Activated CD4-positive, alpha-beta memory T cell treated with anti-CD3 and anti-CD28 coated beads for 36 hours (primary cell): ENCODE measurements at regions of chr6 and their contacts with region 1.

Region 1: DNA sequence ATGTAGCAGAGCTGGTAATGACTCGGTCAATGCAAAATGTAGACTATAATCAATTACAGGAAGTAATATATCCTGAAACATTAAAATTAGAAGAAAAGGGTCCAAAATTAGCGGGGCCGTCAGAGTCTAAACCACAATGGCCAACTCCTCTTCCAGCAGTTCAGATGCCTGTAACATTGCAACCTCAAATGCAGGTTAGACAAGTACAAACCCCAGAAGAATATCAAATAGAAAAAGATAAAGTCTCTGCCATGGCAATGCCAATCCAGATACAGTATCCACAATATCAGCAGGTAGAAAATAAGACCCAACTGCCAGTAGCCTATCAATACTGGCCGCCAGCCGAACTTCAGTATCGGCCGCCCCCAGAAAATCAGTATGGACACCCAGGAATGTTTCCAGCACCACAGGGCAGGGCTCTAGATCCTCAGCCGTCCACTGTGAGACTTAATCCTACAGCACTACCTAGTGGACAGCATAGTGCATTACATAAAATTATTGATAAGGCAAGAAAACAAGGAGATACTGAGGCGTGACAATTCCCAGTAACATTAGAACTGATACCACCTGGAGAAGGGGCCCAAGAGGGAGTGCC is 158.4 kb downstream of the GPX5 start:
- DNase-seq: peak; percentile 14
- H3K4me3 Mint-ChIP-seq: peak overlapping the region; percentile 5
- H3K27ac Mint-ChIP-seq: no peak overlapping the region
- H3K4me1 Mint-ChIP-seq: peaks cover 11% of the 10 kb centered on the region
- H3K27me3 Mint-ChIP-seq: peaks cover 46% of the 10 kb centered on the region

Region 2: GRCh38 chr6:27902335-27903314 is 781.4 kb before region 1 on chr6:
- CTCF ChIA-PET with region 1: no interaction called
- POLR2A ChIA-PET with region 1: no interaction called
- intact Hi-C with region 1: loop called (anchors 10 kb)
- DNase-seq: peak; percentile 92
- H3K4me3 Mint-ChIP-seq: peak overlapping the region; percentile 79
- H3K27ac Mint-ChIP-seq: peak overlapping the region; percentile 91
- H3K4me1 Mint-ChIP-seq: peaks cover 11% of the 10 kb centered on the region
- H3K27me3 Mint-ChIP-seq: peaks cover 13% of the 10 kb centered on the region

Region 3: DNA sequence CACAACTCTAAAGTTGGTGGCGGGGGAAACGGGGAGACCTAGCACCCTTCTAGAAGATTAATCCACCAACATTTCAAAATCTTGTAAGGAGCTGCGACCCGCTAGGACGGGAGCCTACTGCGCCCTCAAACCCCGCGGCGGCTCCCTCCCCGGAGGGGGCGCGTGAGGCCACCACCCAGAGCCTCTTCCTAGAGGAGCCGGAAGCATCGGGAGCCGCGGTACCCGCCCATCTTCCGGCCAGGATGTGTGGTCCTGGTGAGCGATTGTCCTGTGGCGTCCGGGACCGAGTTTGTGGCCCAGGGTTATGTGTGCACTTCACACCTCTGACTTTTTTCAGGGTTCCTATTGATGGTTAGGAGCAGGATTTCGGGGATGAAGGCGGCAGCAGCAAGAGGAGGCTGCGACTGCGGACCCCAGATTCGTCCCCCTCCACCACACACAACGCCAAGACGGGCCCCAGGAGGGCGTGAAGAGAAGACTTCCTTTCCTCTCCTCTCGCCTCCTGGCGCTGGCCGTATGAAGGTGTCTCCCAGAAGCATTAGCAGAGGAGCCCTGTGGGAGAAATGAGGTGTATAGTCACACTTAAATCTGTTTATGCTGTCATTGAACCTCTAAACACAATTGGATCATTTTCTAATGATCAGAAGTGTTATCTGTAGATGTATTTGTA is 593.0 kb before region 1 on chr6:
- CTCF ChIA-PET with region 1: no interaction called
- POLR2A ChIA-PET with region 1: no interaction called
- intact Hi-C with region 1: no loop called
- DNase-seq: no peak
- H3K4me3 Mint-ChIP-seq: peak overlapping the region; percentile 17
- H3K27ac Mint-ChIP-seq: no peak overlapping the region
- H3K4me1 Mint-ChIP-seq: no peaks in the 10 kb centered on the region
- H3K27me3 Mint-ChIP-seq: peaks cover 15% of the 10 kb centered on the region

Region 4: GRCh38 chr6:28393911-28394662 is 290.0 kb before region 1 on chr6:
- CTCF ChIA-PET with region 1: no interaction called
- POLR2A ChIA-PET with region 1: no interaction called
- intact Hi-C with region 1: loop called (anchors 1 kb)
- DNase-seq: no peak
- H3K4me3 Mint-ChIP-seq: no peak overlapping the region
- H3K27ac Mint-ChIP-seq: no peak overlapping the region
- H3K4me1 Mint-ChIP-seq: peaks cover 30% of the 10 kb centered on the region
- H3K27me3 Mint-ChIP-seq: no peaks in the 10 kb centered on the region

Region 5: DNA sequence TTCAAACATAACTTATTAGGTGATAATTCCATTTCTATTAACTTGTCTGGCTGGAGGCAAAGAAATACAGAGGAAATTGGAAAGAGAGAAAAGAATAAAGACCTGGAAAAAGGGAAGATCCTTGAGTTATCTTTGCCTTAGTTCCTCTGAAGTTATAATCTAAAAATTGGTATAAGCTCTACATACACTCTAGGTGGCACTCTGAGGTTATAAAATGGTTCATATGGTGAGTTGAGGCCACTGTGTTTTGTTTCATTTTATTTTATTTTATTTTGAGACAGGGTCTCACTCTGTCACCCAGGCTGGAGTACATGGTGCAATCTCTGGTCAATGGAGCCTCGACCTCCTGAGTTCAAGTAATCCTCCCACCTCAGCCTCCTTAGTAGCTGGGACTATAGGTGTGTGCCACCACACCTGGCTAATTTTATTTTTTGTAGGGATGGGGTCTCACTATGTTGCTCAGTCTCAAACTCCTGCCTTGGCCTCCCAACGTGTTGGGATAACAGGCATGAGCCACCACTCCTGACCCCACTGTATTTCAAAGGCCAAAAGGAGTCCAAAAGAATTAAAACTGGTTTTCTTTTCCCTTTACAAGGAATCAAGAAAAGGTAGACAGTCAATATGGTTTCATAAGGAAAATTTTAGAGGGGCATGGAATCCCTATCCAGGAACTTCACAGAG is 187.8 kb before region 1 on chr6:
- CTCF ChIA-PET with region 1: interaction called, 7 read pairs
- POLR2A ChIA-PET with region 1: no interaction called
- intact Hi-C with region 1: loop called (anchors 2 kb)
- DNase-seq: no peak
- H3K4me3 Mint-ChIP-seq: no peak overlapping the region
- H3K27ac Mint-ChIP-seq: no peak overlapping the region
- H3K4me1 Mint-ChIP-seq: peaks cover 4% of the 10 kb centered on the region
- H3K27me3 Mint-ChIP-seq: peaks cover 24% of the 10 kb centered on the region

Region 6: GRCh38 chr6:28542440-28543296 is 141.4 kb before region 1 on chr6:
- CTCF ChIA-PET with region 1: no interaction called
- POLR2A ChIA-PET with region 1: no interaction called
- intact Hi-C with region 1: loop called (anchors 5 kb)
- DNase-seq: peak; percentile 75
- H3K4me3 Mint-ChIP-seq: peak overlapping the region; percentile 79
- H3K27ac Mint-ChIP-seq: peak overlapping the region; percentile 60
- H3K4me1 Mint-ChIP-seq: peaks cover 19% of the 10 kb centered on the region
- H3K27me3 Mint-ChIP-seq: peaks cover 29% of the 10 kb centered on the region

Region 7: DNA sequence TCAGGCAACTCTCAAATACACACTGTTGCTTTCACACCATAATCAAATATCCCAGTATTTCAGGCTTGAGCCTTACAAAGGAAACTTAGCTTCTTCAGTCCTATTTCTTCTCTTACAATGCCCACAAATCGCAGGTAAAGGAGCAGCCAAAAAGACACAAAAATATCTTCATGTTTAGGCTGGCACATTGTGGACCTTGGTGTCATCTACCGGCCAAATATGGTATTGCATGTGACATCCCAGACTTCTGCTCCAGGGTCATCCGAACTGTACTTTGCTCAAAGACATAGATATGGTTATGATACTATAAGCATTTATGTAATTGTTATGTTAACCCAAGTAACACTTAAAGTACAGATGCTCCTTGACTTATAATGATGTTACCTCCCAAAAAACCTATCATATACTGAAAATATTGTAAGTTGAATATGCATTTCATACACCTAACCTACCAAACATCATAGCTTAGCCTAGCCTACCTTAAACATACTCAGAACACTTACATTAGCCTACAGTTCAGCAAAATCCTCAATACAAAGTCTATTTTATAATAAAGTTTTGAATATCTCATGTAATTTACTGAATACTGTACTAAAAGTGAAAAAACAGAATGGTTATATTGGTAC is 905.5 kb after region 1 on chr6:
- CTCF ChIA-PET with region 1: interaction called, 4 read pairs
- POLR2A ChIA-PET with region 1: no interaction called
- intact Hi-C with region 1: loop called (anchors 10 kb)
- DNase-seq: peak; percentile 58
- H3K4me3 Mint-ChIP-seq: no peak overlapping the region
- H3K27ac Mint-ChIP-seq: no peak overlapping the region
- H3K4me1 Mint-ChIP-seq: no peaks in the 10 kb centered on the region
- H3K27me3 Mint-ChIP-seq: peaks cover 14% of the 10 kb centered on the region